ENCODE measurements at regions of chr14 and their contacts with region 1.

Region 1: GRCh38 chr14:102348376-102348775 is 14.3 kb downstream of the CINP start:
- DNase-seq: no peak

Region 2: GRCh38 chr14:102080183-102081080 is 267.9 kb before region 1 on chr14:
- intact Hi-C with region 1: loop called in 1 of 2 experiments (anchors 2 kb)
- DNase-seq: peak; percentile 24

Region 3: GRCh38 chr14:102285116-102285515 is 63.3 kb before region 1 on chr14:
- intact Hi-C with region 1: no loop called
- DNase-seq: no peak

Measured in posterior vena cava (tissue), 2 donors.